ENCODE measurements at regions of chr1 and their contacts with region 1.

Region 1: GRCh38 chr1:62746085-62746808 is 37.7 kb upstream of the ATG4C start:
- DNase-seq: no peak
- ATAC-seq: peak in 4 of 8 donors; percentile 26 to 50 (median 44)
- H3K4me3 ChIP-seq: peak overlapping the region in 2 of 10 donors; percentile 0 to 11
- H3K27ac ChIP-seq: no peak overlapping the region
- H3K4me1 ChIP-seq: peaks cover 0 to 17% (median 0%) of the 10 kb centered on the region in 9 donors
- H3K27me3 ChIP-seq: peaks cover 0 to 5% (median 0%) of the 10 kb centered on the region in 7 donors
- CTCF ChIP-seq: peak; percentile 19 to 79 (median 62)

Region 2: GRCh38 chr1:62175568-62176179 is 570.6 kb before region 1 on chr1:
- intact Hi-C with region 1: loop called in 2 of 10 experiments (anchors 10 kb)
- DNase-seq: peak in 1 of 2 donors; percentile 32
- ATAC-seq: peak in 1 of 8 donors; percentile 42
- H3K4me3 ChIP-seq: no peak overlapping the region
- H3K27ac ChIP-seq: no peak overlapping the region
- H3K4me1 ChIP-seq: peaks cover 0 to 8% (median 0%) of the 10 kb centered on the region in 9 donors
- H3K27me3 ChIP-seq: peaks cover 0 to 14% (median 0%) of the 10 kb centered on the region in 7 donors
- CTCF ChIP-seq: peak; percentile 73 to 87 (median 81)

Region 3: GRCh38 chr1:62508187-62508758 is 238.0 kb before region 1 on chr1:
- intact Hi-C with region 1: loop called (anchors 2 to 5 kb)
- DNase-seq: peak in 1 of 2 donors; percentile 24
- ATAC-seq: peak in 1 of 8 donors; percentile 29
- H3K4me3 ChIP-seq: no peak overlapping the region
- H3K27ac ChIP-seq: no peak overlapping the region
- H3K4me1 ChIP-seq: no peaks in the 10 kb centered on the region
- H3K27me3 ChIP-seq: no peaks in the 10 kb centered on the region
- CTCF ChIP-seq: peak in 8 of 9 donors; percentile 26 to 77 (median 62)

Region 4: DNA sequence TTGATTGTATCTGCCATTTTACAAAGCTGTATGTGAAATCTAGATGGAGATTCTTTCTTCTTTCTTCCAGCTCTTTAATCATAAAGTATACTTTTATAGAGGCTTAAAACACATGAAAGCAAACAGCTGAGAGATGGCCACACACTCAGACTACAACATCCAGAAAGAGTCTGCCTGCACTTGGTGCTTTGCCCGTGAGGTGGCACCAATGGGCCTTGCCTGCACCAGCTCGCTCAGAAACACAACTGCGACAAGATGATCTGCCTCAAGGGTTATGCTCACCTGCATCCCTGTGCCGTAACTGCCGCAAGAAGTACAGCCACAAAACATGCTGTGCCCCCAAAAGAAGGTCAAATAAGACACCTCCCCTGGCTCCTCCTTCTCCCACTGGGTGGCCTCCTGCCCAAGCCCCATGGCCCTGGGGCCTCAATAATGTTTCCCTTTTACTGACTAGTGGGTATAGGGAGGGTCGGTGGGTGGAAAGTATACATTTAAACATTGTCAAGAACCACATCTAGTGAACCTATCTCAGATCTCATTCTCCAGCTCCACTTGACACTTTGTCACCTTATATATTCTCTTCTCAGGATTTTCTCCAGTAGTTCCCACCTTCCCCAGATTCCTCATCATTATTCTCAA is 215.6 kb before region 1 on chr1:
- intact Hi-C with region 1: loop called in 6 of 10 experiments (anchors 5 to 10 kb)
- DNase-seq: peak; percentile 11 to 20
- ATAC-seq: peak in 5 of 8 donors; percentile 46 to 79 (median 55)
- H3K4me3 ChIP-seq: no peak overlapping the region
- H3K27ac ChIP-seq: no peak overlapping the region
- H3K4me1 ChIP-seq: no peaks in the 10 kb centered on the region
- H3K27me3 ChIP-seq: no peaks in the 10 kb centered on the region
- CTCF ChIP-seq: peak; percentile 6 to 62 (median 55)

Region 5: GRCh38 chr1:62672029-62672428 is 74.2 kb before region 1 on chr1:
- intact Hi-C with region 1: no loop called
- DNase-seq: no peak
- ATAC-seq: no peak
- H3K4me3 ChIP-seq: no peak overlapping the region
- H3K27ac ChIP-seq: no peak overlapping the region
- H3K4me1 ChIP-seq: peaks cover 0 to 7% (median 0%) of the 10 kb centered on the region in 9 donors
- H3K27me3 ChIP-seq: no peaks in the 10 kb centered on the region
- CTCF ChIP-seq: no peak

Measured in heart right ventricle (tissue), 16 donors.